Posterior vena cava (tissue), 2 donors: ENCODE measurements at regions of chr5 and their contacts with region 1.

Region 1: DNA sequence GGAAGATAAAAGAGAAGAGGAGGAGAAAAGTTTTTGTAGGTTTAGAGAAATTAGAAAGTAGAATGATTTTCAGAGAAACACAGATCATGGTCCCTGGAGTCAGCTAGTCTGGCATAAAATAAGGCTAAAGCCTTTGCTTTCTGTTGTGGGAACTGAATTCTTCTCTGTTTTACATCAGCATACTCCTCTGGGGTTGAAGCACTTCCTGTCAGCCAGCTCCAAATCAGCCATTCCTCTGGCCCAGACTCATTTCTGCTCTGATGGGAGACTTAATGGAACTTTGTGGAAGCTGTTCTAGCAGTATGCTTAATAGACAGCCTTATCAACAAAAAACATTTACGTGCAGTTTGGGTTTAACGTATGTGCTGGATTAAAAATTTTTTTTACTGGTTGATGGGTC is 143.2 kb downstream of the HMHB1 start:
- DNase-seq: no peak

Region 2: GRCh38 chr5:143782588-143783386 is 172.4 kb before region 1 on chr5:
- intact Hi-C with region 1: no loop called
- DNase-seq: no peak

Region 3: GRCh38 chr5:143938230-143938629 is 16.9 kb before region 1 on chr5:
- intact Hi-C with region 1: loop called in 1 of 2 experiments (anchors 1 kb)
- DNase-seq: no peak